ENCODE measurements at regions of chr7 and their contacts with region 1.

Region 1: DNA sequence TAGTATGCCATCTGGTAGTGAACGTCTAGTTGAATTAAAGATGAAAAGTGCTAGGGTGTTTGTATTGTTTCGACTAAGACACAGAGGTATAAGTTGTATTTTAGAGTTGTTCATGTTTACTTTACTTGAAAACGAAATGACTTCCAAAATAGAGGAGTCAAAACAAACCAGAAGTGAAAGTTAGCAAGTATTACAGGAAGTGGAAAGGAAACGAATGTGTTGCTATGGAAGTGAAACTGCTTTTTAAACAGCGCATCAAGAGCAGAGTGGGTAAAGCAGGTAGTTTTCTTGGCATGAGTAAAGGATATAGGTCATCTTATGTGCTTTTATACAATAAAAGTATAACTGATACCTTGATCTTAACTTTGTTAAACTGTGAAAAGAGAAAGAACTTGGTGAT is 20.0 kb upstream of the GALNTL5 start:
- DNase-seq: no peak
- H3K4me3 ChIP-seq: no peak overlapping the region
- H3K27ac ChIP-seq: no peak overlapping the region
- H3K4me1 ChIP-seq: peaks cover 16% of the 10 kb centered on the region
- H3K27me3 ChIP-seq: no peaks in the 10 kb centered on the region
- CTCF ChIP-seq: no peak

Region 2: DNA sequence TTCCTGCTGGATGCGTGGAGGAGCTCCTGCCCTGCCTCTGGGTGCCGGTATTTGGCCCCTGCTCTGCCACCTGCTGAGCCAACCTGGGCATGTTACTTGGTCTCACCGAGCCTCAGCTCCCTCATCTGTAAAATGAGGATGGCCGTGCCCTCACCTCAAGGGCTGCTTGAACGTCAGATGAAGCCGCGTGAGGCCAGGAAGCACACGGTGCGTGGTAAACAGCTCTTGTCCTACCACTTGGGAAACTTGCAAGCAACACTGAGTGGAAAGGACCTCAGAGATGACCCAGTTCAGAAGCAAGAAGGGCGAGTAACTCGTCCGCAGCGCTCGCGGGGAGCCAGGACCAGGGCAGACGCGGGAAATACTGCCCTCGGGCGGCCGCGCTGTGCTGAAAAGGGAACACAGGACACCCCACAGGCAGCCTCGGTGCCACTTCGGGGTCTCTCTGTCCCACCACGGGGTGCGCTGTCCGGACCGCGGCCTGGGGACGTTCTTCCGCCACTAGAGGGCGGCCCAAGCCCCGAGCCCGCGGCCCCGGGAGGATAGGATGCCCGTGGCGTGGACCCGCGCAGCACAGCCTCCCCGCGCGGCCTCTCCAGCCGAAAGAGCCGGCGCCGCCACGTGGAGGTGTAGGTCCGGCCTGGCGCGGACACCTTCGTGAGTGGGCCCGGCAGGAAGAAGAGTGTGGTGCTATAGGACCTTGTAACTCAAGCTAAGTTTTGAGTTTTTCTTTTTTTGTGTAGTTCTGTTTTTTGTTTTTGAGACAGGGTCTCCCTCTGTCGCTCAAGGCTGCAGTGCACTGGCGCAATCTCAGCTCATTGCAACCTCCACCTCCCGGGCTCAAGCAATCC is 153.4 kb before region 1 on chr7:
- CTCF ChIA-PET with region 1: no interaction called
- dilution Hi-C with region 1: no loop called
- in situ Hi-C with region 1: no loop called
- intact Hi-C with region 1: loop called (anchors 1 kb)
- DNase-seq: peak; percentile 38
- H3K4me3 ChIP-seq: peak overlapping the region; percentile 12 to 32 (median 31)
- H3K27ac ChIP-seq: no peak overlapping the region
- H3K4me1 ChIP-seq: peaks cover 9% of the 10 kb centered on the region
- H3K27me3 ChIP-seq: no peaks in the 10 kb centered on the region
- CTCF ChIP-seq: peak; percentile 69 to 89

Region 3: GRCh38 chr7:152395112-152395511 is 458.9 kb after region 1 on chr7:
- CTCF ChIA-PET with region 1: no interaction called
- dilution Hi-C with region 1: no loop called
- in situ Hi-C with region 1: no loop called
- intact Hi-C with region 1: no loop called
- DNase-seq: no peak
- H3K4me3 ChIP-seq: no peak overlapping the region
- H3K27ac ChIP-seq: no peak overlapping the region
- H3K4me1 ChIP-seq: no peaks in the 10 kb centered on the region
- H3K27me3 ChIP-seq: no peaks in the 10 kb centered on the region
- CTCF ChIP-seq: no peak

Measured in mammary epithelial cell (primary cell).